ENCODE measurements at regions of chr6 and their contacts with region 1.

Region 1: GRCh38 chr6:52233975-52234823 is 10.1 kb downstream of the IL17F start:
- DNase-seq: peak; percentile 45
- H3K4me3 ChIP-seq: no peak overlapping the region
- H3K27ac ChIP-seq: no peak overlapping the region
- H3K4me1 ChIP-seq: no peaks in the 10 kb centered on the region
- H3K27me3 ChIP-seq: no peaks in the 10 kb centered on the region
- CTCF ChIP-seq: peak; percentile 46 to 51
- POLR2A ChIP-seq: no peak

Region 2: GRCh38 chr6:51855310-51856082 is 378.7 kb before region 1 on chr6:
- CTCF ChIA-PET with region 1: interaction called, 3 read pairs
- POLR2A ChIA-PET with region 1: no interaction called
- dilution Hi-C with region 1: no loop called
- intact Hi-C with region 1: loop called (anchors 10 kb)
- DNase-seq: peak; percentile 32
- H3K4me3 ChIP-seq: no peak overlapping the region
- H3K27ac ChIP-seq: no peak overlapping the region
- H3K4me1 ChIP-seq: no peaks in the 10 kb centered on the region
- H3K27me3 ChIP-seq: no peaks in the 10 kb centered on the region
- CTCF ChIP-seq: peak; percentile 35 to 44
- POLR2A ChIP-seq: no peak

Region 3: DNA sequence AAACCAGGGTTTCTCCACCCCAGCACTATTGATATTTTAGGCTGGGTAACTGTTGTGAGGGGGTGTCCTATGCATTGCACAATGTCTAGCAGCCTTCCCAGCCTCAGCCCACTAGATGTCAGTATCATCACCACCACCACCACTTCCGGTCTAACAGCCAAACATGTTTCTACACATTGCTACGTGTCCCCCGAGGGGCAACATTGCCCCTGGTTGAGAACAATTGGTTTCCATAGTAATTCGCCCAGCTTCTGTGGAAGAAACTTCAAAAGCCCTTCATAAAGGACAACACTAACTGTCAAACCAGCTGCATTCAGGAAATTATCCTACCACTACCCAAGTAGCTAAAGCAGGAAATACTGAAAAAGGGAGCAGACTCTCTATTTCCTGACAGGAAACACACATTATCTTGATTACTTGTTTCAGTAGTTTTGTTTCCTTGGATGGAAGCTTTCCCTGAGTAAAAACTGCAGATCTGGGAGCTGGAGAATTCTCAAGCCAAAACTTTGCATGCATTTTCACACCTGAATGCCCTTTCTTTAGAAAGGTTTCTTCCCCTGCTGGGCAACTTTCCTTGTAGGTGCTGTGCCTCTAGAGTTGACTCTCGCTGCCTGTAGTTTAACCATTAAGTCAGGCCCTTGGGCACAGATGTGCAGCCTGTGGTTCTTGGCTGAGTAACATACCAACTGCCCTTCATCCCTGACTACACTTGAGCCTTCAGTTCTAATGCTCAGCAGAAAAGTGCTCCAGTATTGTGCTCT is 170.4 kb before region 1 on chr6:
- CTCF ChIA-PET with region 1: interaction called, 8 read pairs
- POLR2A ChIA-PET with region 1: no interaction called
- dilution Hi-C with region 1: no loop called
- intact Hi-C with region 1: loop called (anchors 1 kb)
- DNase-seq: peak; percentile 17
- H3K4me3 ChIP-seq: no peak overlapping the region
- H3K27ac ChIP-seq: no peak overlapping the region
- H3K4me1 ChIP-seq: peaks cover 7% of the 10 kb centered on the region
- H3K27me3 ChIP-seq: no peaks in the 10 kb centered on the region
- CTCF ChIP-seq: peak; percentile 33 to 52
- POLR2A ChIP-seq: no peak

Region 4: DNA sequence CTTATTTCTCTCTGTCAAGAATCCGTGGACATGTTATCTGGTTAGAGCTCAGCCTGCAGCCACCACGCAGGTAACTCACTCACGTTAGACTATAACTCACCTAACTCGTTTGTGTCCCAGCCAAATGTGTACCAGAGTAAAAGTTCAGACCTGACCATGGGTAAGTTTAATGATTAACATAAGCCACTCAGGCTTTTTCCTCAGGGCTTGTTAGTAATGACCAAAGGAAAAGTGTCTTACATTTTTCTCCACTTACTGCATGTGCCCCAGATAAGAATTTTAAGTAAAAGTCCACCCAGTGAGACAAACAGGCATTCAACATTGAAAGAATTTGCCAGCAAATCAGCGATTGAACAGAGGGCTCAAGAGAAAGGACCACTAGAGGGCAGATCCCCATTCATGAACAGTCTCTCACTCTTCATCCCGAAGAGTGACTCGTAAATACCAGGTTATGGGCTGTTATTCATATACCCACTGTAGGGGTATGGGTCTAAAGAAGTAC is 146.7 kb before region 1 on chr6 and contains the start of gene PKHD1:
- CTCF ChIA-PET with region 1: interaction called, 4 read pairs
- POLR2A ChIA-PET with region 1: no interaction called
- dilution Hi-C with region 1: no loop called
- intact Hi-C with region 1: loop called (anchors 1 kb)
- DNase-seq: peak; percentile 2
- H3K4me3 ChIP-seq: no peak within 1 kb of the TSS
- H3K27ac ChIP-seq: no peak within 1 kb of the TSS
- H3K4me1 ChIP-seq: no peaks in the 10 kb centered on the region
- H3K27me3 ChIP-seq: no peaks in the 10 kb centered on the region
- CTCF ChIP-seq: peak; percentile 10 to 27
- POLR2A ChIP-seq: no peak
- total RNA-seq, gene PKHD1: not detected in 2 replicates

Region 5: GRCh38 chr6:52098634-52099185 is 135.5 kb before region 1 on chr6:
- CTCF ChIA-PET with region 1: no interaction called
- POLR2A ChIA-PET with region 1: no interaction called
- dilution Hi-C with region 1: no loop called
- intact Hi-C with region 1: loop called (anchors 1 kb)
- DNase-seq: peak; percentile 3
- H3K4me3 ChIP-seq: no peak overlapping the region
- H3K27ac ChIP-seq: no peak overlapping the region
- H3K4me1 ChIP-seq: no peaks in the 10 kb centered on the region
- H3K27me3 ChIP-seq: no peaks in the 10 kb centered on the region
- CTCF ChIP-seq: no peak
- POLR2A ChIP-seq: no peak

Region 6: GRCh38 chr6:52162940-52163908 is 71.0 kb before region 1 on chr6:
- CTCF ChIA-PET with region 1: interaction called, 15 read pairs
- POLR2A ChIA-PET with region 1: no interaction called
- dilution Hi-C with region 1: no loop called
- intact Hi-C with region 1: loop called (anchors 1 kb)
- DNase-seq: peak; percentile 16
- H3K4me3 ChIP-seq: no peak overlapping the region
- H3K27ac ChIP-seq: no peak overlapping the region
- H3K4me1 ChIP-seq: no peaks in the 10 kb centered on the region
- H3K27me3 ChIP-seq: peaks cover 2 to 7% of the 10 kb centered on the region in 2 experiments
- CTCF ChIP-seq: peak; percentile 12 to 24
- POLR2A ChIP-seq: no peak

Measured in endothelial cell of umbilical vein (primary cell).